Endothelial cell of umbilical vein (primary cell): ENCODE measurements at regions of chr11 and their contacts with region 1.

Region 1: DNA sequence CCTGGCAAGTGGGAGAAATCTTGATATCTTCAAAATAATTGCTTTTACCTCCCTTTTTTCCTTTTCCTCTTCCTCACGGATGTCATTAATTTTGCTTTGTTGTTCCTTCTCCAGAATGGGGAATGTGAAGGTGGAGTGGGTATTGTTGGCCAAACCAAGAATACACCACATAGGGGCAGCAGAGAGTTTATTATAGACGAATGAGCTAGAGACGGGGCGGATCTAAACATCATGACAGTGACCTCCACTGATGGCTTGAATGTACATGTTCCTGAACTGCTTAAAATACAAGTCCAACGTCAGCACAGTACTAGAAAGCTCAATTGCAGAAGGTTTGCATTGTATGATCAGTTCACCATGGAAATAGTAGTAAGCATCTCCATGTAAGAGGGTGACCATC is 122.3 kb upstream of the SNX19 start:
- DNase-seq: no peak
- H3K4me3 ChIP-seq: no peak overlapping the region
- H3K27ac ChIP-seq: no peak overlapping the region
- H3K4me1 ChIP-seq: peaks cover 3% of the 10 kb centered on the region
- H3K27me3 ChIP-seq: peaks cover 0 to 1% of the 10 kb centered on the region in 2 experiments
- CTCF ChIP-seq: peak in 1 of 2 donors; percentile 9
- POLR2A ChIP-seq: no peak

Region 2: GRCh38 chr11:130924770-130925169 is 113.8 kb before region 1 on chr11:
- CTCF ChIA-PET with region 1: interaction called, 4 read pairs
- POLR2A ChIA-PET with region 1: no interaction called
- dilution Hi-C with region 1: no loop called
- intact Hi-C with region 1: loop called (anchors 5 kb)
- DNase-seq: no peak
- H3K4me3 ChIP-seq: no peak overlapping the region
- H3K27ac ChIP-seq: no peak overlapping the region
- H3K4me1 ChIP-seq: no peaks in the 10 kb centered on the region
- H3K27me3 ChIP-seq: peaks cover 2 to 11% of the 10 kb centered on the region in 2 experiments
- CTCF ChIP-seq: no peak
- POLR2A ChIP-seq: no peak

Region 3: GRCh38 chr11:131195661-131196517 is 157.3 kb after region 1 on chr11:
- CTCF ChIA-PET with region 1: no interaction called
- POLR2A ChIA-PET with region 1: no interaction called
- dilution Hi-C with region 1: no loop called
- intact Hi-C with region 1: no loop called
- DNase-seq: no peak
- H3K4me3 ChIP-seq: no peak overlapping the region
- H3K27ac ChIP-seq: no peak overlapping the region
- H3K4me1 ChIP-seq: no peaks in the 10 kb centered on the region
- H3K27me3 ChIP-seq: no peaks in the 10 kb centered on the region
- CTCF ChIP-seq: no peak
- POLR2A ChIP-seq: no peak